ENCODE measurements at regions of chr17 and their contacts with region 1.

Region 1: GRCh38 chr17:8173056-8173870 is 2.9 kb downstream of the TMEM107 start:
- DNase-seq: peak; percentile 90
- ATAC-seq: peak; percentile 79
- H3K4me3 Mint-ChIP-seq: peak overlapping the region; percentile 85
- H3K27ac Mint-ChIP-seq: peak overlapping the region; percentile 99
- H3K4me1 Mint-ChIP-seq: peaks cover 50% of the 10 kb centered on the region
- H3K27me3 Mint-ChIP-seq: no peaks in the 10 kb centered on the region

Region 2: DNA sequence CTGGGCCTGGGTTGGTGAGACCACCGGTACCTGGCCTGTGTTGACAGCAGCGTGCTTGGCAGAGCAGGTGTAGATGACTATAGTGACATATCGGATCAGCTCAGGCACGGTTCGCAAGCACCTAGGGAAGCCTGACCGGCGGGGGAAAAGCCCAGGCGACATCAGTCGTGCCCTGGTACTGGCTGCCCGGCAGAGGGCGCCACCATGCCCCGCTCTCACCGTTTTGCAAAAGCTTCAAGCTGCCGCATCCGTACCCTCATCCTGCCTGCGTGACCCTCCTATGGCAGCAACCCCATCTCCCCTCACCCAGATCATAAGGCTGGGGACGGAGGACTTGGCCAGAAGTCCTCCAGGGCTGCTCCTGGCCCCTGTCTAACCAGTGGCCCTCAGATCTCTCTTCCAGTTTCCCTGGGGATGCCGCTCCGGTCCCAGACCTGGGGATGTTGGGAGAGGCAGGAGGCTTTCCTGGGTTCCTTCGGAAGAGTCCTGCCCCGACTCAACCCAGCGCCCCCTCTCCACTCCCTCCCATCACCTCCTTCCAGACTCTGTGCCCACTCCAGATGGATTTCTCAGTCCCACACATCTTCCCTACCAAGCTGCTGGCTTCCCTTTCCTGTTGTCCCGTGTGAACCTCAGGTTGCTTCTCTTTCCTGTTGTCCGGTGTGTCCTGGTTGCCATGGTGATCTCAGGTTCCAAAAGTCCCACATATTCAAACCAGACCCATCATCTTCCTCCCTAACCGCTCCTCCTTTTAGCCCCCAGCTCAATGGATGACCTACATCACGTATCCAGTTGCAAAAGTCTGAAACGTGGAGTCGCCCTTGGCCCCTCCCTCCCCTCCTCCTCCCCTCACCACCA is 99.4 kb before region 1 on chr17:
- CTCF ChIA-PET with region 1: no interaction called
- POLR2A ChIA-PET with region 1: interaction called, 15 read pairs
- DNase-seq: peak; percentile 87
- ATAC-seq: peak; percentile 87
- H3K4me3 Mint-ChIP-seq: peak overlapping the region; percentile 54
- H3K27ac Mint-ChIP-seq: no peak overlapping the region
- H3K4me1 Mint-ChIP-seq: peaks cover 22% of the 10 kb centered on the region
- H3K27me3 Mint-ChIP-seq: peaks cover 52% of the 10 kb centered on the region

Region 3: DNA sequence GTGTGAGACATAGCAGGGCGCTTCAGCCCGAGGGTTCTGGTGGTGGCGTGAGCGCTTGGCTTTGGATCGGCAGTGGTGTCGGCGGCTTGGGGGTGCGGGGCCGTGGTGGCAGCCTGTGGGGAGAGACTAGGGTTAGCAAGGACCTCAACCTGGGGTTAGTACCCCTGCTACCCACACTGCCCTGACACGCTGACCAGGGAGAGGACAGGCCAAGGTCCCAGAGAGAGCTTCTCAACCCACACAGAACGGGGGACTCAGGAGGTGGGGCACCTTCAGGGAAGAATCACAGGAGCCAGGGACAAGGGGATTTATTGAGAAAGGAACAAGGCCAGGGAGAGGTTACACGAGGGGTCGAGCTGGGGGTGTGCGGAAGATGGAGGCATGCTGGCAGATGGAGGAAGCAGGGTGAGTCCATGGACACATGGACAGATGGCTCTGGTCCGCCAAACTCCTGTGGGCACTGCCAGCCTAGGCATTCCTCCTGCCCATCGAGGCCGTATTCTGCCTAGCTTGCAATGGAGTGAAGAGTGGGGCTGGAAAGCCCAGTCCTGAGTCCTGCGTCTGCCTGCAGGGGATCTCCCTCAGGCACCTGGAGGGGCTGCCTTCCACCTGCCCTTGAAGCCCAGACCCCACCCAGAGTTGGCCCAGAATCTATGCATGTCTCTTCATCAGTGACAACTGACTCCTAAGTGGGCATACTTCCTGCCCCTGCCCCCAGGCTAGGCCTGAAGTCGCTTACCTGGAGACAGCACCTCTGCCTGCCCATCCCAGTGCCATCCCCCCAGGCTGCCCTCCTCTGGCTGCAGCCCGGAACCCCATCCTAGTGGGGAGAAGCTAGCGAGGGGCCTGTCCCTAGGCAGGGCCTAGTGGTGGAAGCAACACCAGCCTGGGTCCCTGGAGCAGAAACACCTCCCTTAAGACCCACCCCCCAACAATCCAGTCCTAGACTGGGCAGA is 29.2 kb before region 1 on chr17:
- CTCF ChIA-PET with region 1: no interaction called
- POLR2A ChIA-PET with region 1: interaction called, 66 read pairs
- DNase-seq: no peak
- ATAC-seq: no peak
- H3K4me3 Mint-ChIP-seq: no peak overlapping the region
- H3K27ac Mint-ChIP-seq: peak overlapping the region; percentile 11
- H3K4me1 Mint-ChIP-seq: peaks cover 3% of the 10 kb centered on the region
- H3K27me3 Mint-ChIP-seq: no peaks in the 10 kb centered on the region

Region 4: DNA sequence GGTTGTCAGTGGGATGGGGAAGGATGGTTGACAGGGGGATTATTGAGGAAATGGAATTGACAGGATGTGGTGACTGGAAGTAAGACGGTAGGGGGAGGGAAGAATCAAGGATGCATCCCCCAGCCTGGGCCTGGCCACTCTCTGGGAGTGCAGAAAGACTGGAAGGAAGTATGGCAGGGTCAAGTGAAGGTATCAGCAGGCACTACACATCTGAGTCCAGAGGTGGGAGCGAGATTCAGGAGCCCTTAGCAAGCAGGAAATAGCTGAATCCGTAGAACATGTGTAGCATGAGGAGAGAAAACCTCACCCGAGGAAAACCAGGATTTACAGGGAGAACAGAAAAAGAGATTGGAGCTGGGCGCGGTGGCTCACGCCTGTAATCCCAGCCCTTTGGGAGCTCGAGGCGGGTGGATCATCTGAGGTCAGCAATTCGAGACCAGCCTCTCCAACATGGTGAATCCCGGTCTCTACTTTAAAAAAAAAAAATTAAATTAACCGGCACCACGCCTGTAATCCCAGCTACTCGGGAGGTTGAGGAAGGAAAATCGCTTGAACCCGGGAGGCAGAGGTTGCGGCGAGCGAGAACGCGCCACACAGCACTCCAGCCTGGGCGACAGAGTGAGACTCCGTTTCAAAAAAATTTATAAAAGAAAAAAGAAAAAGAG is 10.9 kb after region 1 on chr17:
- CTCF ChIA-PET with region 1: interaction called, 7 read pairs
- POLR2A ChIA-PET with region 1: interaction called, 212 read pairs
- DNase-seq: no peak
- ATAC-seq: no peak
- H3K4me3 Mint-ChIP-seq: peak overlapping the region; percentile 57
- H3K27ac Mint-ChIP-seq: no peak overlapping the region
- H3K4me1 Mint-ChIP-seq: peaks cover 9% of the 10 kb centered on the region
- H3K27me3 Mint-ChIP-seq: peaks cover 10% of the 10 kb centered on the region

Region 5: GRCh38 chr17:8209909-8210760 is 36.9 kb after region 1 on chr17 and contains the start of gene AURKB:
- CTCF ChIA-PET with region 1: no interaction called
- POLR2A ChIA-PET with region 1: interaction called, 50 read pairs
- DNase-seq: peak; percentile 96
- ATAC-seq: peak; percentile 97
- H3K4me3 Mint-ChIP-seq: peak within 1 kb of the TSS; percentile 99
- H3K27ac Mint-ChIP-seq: peak within 1 kb of the TSS; percentile 99
- H3K4me1 Mint-ChIP-seq: peaks cover 41% of the 10 kb centered on the region
- H3K27me3 Mint-ChIP-seq: no peaks in the 10 kb centered on the region
- total RNA-seq, gene AURKB: 182 to 210 TPM

Region 6: GRCh38 chr17:8294814-8295316 is 121.6 kb after region 1 on chr17:
- CTCF ChIA-PET with region 1: interaction called, 3 read pairs
- POLR2A ChIA-PET with region 1: interaction called, 30 read pairs
- DNase-seq: no peak
- ATAC-seq: no peak
- H3K4me3 Mint-ChIP-seq: peak overlapping the region; percentile 84
- H3K27ac Mint-ChIP-seq: peak overlapping the region; percentile 90
- H3K4me1 Mint-ChIP-seq: peaks cover 48% of the 10 kb centered on the region
- H3K27me3 Mint-ChIP-seq: no peaks in the 10 kb centered on the region

Measured in activated CD8-positive, alpha-beta T cell treated with anti-CD3 and anti-CD28 coated beads, Interleukin-2, amount 10 ng/mL, durations not matched to agents 7 days and 5 days (primary cell).